SK-N-SH (cell line): ENCODE measurements at regions of chr7 and their contacts with region 1.

Region 1: DNA sequence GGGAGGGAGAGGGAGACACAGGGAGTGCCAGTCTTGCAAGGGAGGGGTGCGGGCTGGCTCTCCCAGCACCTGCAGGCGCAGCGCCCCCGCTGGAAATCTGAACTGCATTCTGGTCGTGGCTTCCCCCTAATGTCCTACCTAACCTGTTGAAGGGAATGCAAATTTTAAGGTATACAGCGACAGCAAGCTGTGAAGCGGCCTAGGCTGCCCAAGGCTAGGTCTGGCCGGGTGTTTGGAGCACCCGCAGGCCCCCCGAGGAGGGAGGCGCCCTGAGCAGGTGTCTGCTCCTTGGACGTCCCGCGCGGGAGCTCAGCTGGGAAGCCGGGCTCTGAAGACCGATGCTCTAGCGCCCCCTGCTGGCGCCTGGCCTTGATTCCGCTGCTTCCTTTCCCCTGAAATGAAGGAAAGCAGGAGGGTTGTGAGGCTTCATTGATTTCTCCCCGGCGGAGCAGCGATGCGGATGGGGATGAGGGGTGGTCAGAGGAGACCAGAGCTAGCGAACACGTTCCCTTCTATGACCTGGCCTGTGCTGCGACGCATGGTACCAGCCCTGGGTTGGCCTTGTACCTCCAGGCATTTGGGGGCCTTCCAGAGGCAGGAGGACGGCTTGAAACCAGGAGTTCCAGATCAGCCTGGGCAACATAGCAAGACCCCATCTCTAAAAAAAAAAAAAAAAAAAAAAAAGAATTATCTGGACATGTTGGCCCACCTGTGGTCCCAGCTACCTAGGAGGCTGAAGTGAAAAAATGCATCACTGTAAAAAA is 601.3 kb downstream of the GALNT17 start:
- DNase-seq: peak; percentile 89
- H3K4me3 ChIP-seq: peak overlapping the region in 1 of 2 experiments; percentile 27; a peak in 1 of 4 replicates
- H3K27ac ChIP-seq: no peak overlapping the region
- H3K4me1 ChIP-seq: no peaks in the 10 kb centered on the region; a peak in 1 of 4 replicates
- H3K27me3 ChIP-seq: no peaks in the 10 kb centered on the region
- CTCF ChIP-seq: peak; percentile 92
- EP300 ChIP-seq: no peak
- RAD21 ChIP-seq: peak; percentile 84

Region 2: DNA sequence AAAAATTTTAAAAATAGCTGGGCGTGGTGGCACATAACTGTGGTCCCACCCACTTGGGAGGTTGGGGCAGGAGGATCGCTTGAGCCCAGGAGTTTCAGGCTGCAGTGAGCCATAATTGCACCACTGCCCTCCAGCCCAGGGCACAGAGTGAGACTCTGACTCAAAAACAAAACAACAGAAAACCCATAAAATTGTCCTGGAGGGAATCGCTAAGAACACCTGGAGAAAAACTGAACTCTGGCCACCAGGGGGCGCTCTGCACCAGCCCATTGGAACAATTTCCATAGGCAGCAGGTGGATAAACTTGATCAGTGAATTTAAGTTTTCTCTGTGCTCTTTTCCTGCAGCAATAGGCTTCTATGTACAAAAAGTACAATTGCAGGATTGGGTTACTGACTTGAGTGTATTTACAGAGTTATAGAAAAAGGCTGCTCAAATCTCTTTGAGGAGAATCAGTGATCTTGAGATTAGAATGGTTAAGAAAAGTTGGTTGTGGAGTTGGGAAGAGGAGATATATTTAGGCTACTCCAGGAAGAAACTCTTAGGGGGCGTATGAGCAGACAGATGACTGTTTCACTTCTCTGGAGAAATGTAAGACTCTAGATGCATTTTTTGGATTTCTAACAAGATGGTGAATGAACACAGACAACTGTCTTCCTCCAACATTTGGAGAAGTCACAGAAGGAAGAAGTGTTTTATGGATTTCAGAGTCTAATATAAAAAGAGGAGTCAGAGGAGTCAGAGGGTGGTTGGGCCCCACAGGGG is 876.2 kb before region 1 on chr7:
- CTCF ChIA-PET with region 1: interaction called, 141 read pairs
- POLR2A ChIA-PET with region 1: no interaction called
- DNase-seq: peak; percentile 71
- H3K4me3 ChIP-seq: no peak overlapping the region
- H3K27ac ChIP-seq: no peak overlapping the region
- H3K4me1 ChIP-seq: no peaks in the 10 kb centered on the region
- H3K27me3 ChIP-seq: no peaks in the 10 kb centered on the region
- CTCF ChIP-seq: peak; percentile 99
- EP300 ChIP-seq: no peak
- RAD21 ChIP-seq: peak; percentile 91

Region 3: GRCh38 chr7:71710442-71710841 is 22.8 kb before region 1 on chr7:
- CTCF ChIA-PET with region 1: interaction called, 17 read pairs
- POLR2A ChIA-PET with region 1: no interaction called
- DNase-seq: no peak
- H3K4me3 ChIP-seq: no peak overlapping the region
- H3K27ac ChIP-seq: no peak overlapping the region
- H3K4me1 ChIP-seq: no peaks in the 10 kb centered on the region
- H3K27me3 ChIP-seq: no peaks in the 10 kb centered on the region
- CTCF ChIP-seq: no peak
- EP300 ChIP-seq: no peak
- RAD21 ChIP-seq: no peak

Region 4: GRCh38 chr7:71746006-71746405 is 12.7 kb after region 1 on chr7:
- CTCF ChIA-PET with region 1: interaction called, 37 read pairs
- POLR2A ChIA-PET with region 1: no interaction called
- DNase-seq: no peak
- H3K4me3 ChIP-seq: no peak overlapping the region
- H3K27ac ChIP-seq: no peak overlapping the region
- H3K4me1 ChIP-seq: no peaks in the 10 kb centered on the region
- H3K27me3 ChIP-seq: no peaks in the 10 kb centered on the region
- CTCF ChIP-seq: no peak
- EP300 ChIP-seq: no peak
- RAD21 ChIP-seq: no peak

Region 5: DNA sequence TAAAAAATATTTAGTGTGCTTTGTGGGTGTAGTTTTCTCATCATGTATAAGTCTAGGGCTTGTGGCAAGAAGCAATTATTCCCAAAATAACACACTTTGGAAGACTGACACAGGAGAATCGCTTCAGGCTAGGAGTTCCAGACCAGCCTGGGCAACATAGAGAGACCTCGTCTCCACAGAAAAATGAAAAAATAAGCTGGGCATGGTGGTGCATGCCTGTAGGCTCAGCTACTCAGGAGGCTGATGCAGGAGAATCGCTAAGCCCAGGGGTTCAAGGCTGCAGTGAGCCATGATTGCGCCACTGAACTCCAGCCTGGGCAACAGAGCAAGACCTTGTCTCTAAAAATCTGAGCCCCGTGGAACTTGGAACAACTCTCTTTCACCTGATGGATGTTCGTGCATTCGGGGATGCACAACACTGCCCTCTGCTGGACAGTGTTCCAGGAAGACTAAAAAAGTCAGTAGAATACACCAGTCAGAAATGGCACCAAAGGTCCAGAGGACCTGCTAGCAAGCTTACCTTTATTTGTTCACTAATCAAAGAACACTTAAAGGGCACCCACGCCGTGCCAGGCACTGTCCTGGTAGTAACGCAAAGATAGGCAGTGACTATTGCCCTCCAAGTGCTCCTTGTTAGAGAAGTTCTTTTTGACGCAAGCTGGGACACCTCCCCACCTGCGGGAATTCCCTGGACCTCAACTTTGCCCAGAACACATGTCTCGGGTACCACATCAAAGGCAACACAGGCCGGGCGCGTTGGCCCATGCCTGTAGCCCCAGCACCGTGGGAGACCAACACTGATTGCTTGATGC is 760.8 kb after region 1 on chr7:
- CTCF ChIA-PET with region 1: no interaction called
- POLR2A ChIA-PET with region 1: no interaction called
- DNase-seq: peak; percentile 65
- H3K4me3 ChIP-seq: peak overlapping the region in 1 of 2 experiments; percentile 49; a peak in 1 of 4 replicates
- H3K27ac ChIP-seq: no peak overlapping the region
- H3K4me1 ChIP-seq: peaks cover 0 to 6% of the 10 kb centered on the region in 2 experiments; a peak in 1 of 4 replicates
- H3K27me3 ChIP-seq: no peaks in the 10 kb centered on the region
- CTCF ChIP-seq: peak; percentile 92
- EP300 ChIP-seq: no peak
- RAD21 ChIP-seq: peak; percentile 67